Caco-2 (cell line): ENCODE measurements at regions of chr19 and their contacts with region 1.

Region 1: DNA sequence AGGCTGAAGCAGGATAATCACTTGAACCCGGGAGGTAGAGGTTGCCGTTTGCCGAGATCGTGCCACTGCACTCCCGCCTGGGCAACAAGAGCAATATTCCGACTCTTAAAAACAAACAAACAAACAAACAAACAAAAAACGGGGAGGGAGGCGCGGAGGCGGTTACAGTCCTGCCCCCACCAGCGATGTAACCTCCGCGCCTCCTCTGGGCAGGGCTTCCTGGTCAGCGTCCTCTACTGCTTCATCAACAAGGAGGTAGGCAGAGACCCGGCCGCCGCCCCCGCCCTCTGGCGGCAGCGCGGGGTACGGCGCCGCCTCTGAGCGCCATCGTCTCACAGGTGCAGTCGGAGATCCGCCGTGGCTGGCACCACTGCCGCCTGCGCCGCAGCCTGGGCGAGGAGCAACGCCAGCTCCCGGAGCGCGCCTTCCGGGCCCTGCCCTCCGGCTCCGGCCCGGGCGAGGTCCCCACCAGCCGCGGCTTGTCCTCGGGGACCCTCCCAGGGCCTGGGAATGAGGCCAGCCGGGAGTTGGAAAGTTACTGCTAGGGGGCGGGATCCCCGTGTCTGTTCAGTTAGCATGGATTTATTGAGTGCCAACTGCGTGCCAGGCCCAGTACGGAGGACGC is 10.2 kb downstream of the SNRPD2 start:
- DNase-seq: peak; percentile 88 to 93
- H3K4me3 ChIP-seq: peak overlapping the region; percentile 40
- H3K4me3 Mint-ChIP-seq: peak overlapping the region; percentile 76
- H3K27ac Mint-ChIP-seq: peak overlapping the region; percentile 81
- H3K4me1 ChIP-seq: peaks cover 15% of the 10 kb centered on the region
- H3K4me1 Mint-ChIP-seq: peaks cover 12% of the 10 kb centered on the region
- H3K27me3 ChIP-seq: no peaks in the 10 kb centered on the region
- H3K27me3 Mint-ChIP-seq: no peaks in the 10 kb centered on the region
- CTCF ChIP-seq: peak; percentile 96 to 97

Region 2: DNA sequence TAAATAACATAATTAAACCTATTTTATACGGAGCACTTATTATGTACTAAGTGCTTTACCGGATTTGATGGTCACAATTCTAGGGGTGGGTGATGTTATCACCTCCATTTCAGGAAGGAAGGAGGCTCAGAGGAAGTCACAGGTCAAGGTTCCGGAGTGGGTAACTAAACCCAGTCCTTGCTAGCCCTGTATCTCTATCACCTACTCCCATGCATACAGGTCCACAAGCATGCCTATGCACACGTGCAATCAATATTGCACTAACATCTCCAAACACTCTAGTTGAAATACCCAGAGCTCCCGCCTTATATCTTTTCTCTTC is 231.5 kb before region 1 on chr19:
- CTCF ChIA-PET with region 1: interaction called, 10 read pairs
- POLR2A ChIA-PET with region 1: no interaction called
- intact Hi-C with region 1: no loop called
- DNase-seq: no peak
- H3K4me3 ChIP-seq: peak overlapping the region; percentile 51
- H3K4me3 Mint-ChIP-seq: peak overlapping the region; percentile 82
- H3K27ac Mint-ChIP-seq: peak overlapping the region; percentile 98
- H3K4me1 ChIP-seq: peaks cover 24% of the 10 kb centered on the region
- H3K4me1 Mint-ChIP-seq: peaks cover 39% of the 10 kb centered on the region
- H3K27me3 ChIP-seq: no peaks in the 10 kb centered on the region
- H3K27me3 Mint-ChIP-seq: no peaks in the 10 kb centered on the region
- CTCF ChIP-seq: no peak

Region 3: GRCh38 chr19:45615795-45616708 is 65.5 kb before region 1 on chr19:
- CTCF ChIA-PET with region 1: no interaction called
- POLR2A ChIA-PET with region 1: interaction called, 11 read pairs
- intact Hi-C with region 1: no loop called
- DNase-seq: peak; percentile 78 to 86
- H3K4me3 ChIP-seq: no peak overlapping the region
- H3K4me3 Mint-ChIP-seq: no peak overlapping the region
- H3K27ac Mint-ChIP-seq: no peak overlapping the region
- H3K4me1 ChIP-seq: 0 out of 2 replicates have a peak, but pooled peaks cover 10% of the 10 kb centered on the region
- H3K4me1 Mint-ChIP-seq: peaks cover 9% of the 10 kb centered on the region
- H3K27me3 ChIP-seq: no peaks in the 10 kb centered on the region
- H3K27me3 Mint-ChIP-seq: no peaks in the 10 kb centered on the region
- CTCF ChIP-seq: no peak

Region 4: GRCh38 chr19:45670670-45671453 is 10.6 kb before region 1 on chr19:
- CTCF ChIA-PET with region 1: interaction called, 18 read pairs
- POLR2A ChIA-PET with region 1: interaction called, 12 read pairs
- intact Hi-C with region 1: loop called (anchors 1 kb)
- DNase-seq: peak; percentile 74 to 80
- H3K4me3 ChIP-seq: no peak overlapping the region
- H3K4me3 Mint-ChIP-seq: peak overlapping the region; percentile 85
- H3K27ac Mint-ChIP-seq: peak overlapping the region; percentile 19
- H3K4me1 ChIP-seq: no peaks in the 10 kb centered on the region
- H3K4me1 Mint-ChIP-seq: peaks cover 8% of the 10 kb centered on the region
- H3K27me3 ChIP-seq: no peaks in the 10 kb centered on the region
- H3K27me3 Mint-ChIP-seq: no peaks in the 10 kb centered on the region
- CTCF ChIP-seq: no peak

Region 5: DNA sequence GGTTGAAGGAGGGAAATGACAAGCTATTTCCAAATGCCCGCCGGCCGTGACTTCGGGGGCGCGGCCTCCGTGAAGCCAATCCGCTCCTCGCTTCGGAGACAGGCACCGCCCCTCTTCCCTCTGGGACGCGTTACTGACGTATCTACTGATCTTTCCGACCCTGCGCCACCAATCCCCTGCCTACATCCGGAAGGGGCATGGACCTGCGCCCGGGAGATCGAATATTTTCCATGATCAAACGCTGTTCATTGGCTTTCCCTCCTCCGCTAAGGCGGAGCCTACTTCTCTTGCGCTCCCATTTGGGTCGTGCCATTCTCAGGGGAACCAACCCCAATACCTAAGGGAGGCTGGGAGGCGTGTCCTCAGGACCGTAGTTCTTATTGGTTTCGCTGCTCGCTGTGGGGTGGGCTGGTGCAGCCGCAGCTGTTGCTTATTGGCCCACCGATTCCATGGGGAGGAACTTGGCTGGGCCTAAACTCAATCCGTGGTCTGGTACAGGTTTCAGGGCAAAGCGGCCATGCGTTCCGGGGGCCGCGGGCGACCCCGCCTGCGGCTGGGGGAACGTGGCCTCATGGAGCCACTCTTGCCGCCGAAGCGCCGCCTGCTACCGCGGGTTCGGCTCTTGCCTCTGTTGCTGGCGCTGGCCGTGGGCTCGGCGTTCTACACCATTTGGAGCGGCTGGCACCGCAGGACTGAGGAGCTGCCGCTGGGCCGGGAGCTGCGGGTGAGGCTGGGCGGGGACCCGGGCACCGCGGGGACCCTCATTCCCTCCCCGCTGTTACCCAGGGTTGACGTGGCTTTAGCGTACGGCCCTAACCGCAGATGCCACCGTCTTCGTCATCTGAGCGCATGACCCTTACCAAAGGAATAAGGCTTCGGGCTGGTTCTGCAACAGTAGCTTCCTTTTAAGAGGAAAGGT is 10.9 kb after region 1 on chr19 and contains the start of gene QPCTL:
- CTCF ChIA-PET with region 1: interaction called, 46 read pairs
- POLR2A ChIA-PET with region 1: interaction called, 54 read pairs
- intact Hi-C with region 1: loop called (anchors 1 kb)
- DNase-seq: peak; percentile 98 to 99
- H3K4me3 ChIP-seq: peak within 1 kb of the TSS; percentile 95
- H3K4me3 Mint-ChIP-seq: peak within 1 kb of the TSS; percentile 83
- H3K27ac Mint-ChIP-seq: peak within 1 kb of the TSS; percentile 93
- H3K4me1 ChIP-seq: peaks cover 4% of the 10 kb centered on the region; the same call in 1 of the 2 replicates
- H3K4me1 Mint-ChIP-seq: no peaks in the 10 kb centered on the region
- H3K27me3 ChIP-seq: no peaks in the 10 kb centered on the region
- H3K27me3 Mint-ChIP-seq: no peaks in the 10 kb centered on the region
- CTCF ChIP-seq: no peak
- total RNA-seq, gene QPCTL: 16.9 and 20.2 TPM in 2 replicates

Region 6: GRCh38 chr19:45717166-45717982 is 35.9 kb after region 1 on chr19:
- CTCF ChIA-PET with region 1: interaction called, 5 read pairs
- POLR2A ChIA-PET with region 1: interaction called, 20 read pairs
- intact Hi-C with region 1: no loop called
- DNase-seq: peak; percentile 99 to 100
- H3K4me3 ChIP-seq: peak overlapping the region; percentile 64
- H3K4me3 Mint-ChIP-seq: peak overlapping the region; percentile 95
- H3K27ac Mint-ChIP-seq: peak overlapping the region; percentile 96
- H3K4me1 ChIP-seq: peaks cover 14% of the 10 kb centered on the region
- H3K4me1 Mint-ChIP-seq: peaks cover 19% of the 10 kb centered on the region
- H3K27me3 ChIP-seq: no peaks in the 10 kb centered on the region
- H3K27me3 Mint-ChIP-seq: no peaks in the 10 kb centered on the region
- CTCF ChIP-seq: peak in 1 of 2 experiments; percentile 26